Posterior vena cava (tissue), 2 donors: ENCODE measurements at regions of chr7 and their contacts with region 1.

Region 1: DNA sequence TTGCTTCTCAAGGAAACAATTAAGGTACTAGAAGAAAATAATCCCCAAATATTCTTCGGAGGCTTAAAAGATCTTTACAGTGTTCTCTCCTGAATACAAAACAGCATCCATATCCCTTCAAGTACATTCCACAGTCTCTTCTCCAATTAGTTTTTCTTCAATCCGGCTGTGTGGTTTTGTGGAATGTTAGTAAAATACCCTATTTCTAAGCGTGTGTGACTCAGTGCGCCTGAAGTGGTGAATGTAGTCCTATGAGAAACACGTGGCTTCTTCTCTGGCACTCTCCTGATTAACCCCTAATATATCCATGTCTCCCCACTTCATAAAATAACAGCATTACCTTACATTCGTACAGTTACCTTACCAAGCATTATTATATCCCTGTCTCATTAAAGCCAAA is 570.2 kb downstream of the ARL4A start:
- DNase-seq: no peak

Region 2: DNA sequence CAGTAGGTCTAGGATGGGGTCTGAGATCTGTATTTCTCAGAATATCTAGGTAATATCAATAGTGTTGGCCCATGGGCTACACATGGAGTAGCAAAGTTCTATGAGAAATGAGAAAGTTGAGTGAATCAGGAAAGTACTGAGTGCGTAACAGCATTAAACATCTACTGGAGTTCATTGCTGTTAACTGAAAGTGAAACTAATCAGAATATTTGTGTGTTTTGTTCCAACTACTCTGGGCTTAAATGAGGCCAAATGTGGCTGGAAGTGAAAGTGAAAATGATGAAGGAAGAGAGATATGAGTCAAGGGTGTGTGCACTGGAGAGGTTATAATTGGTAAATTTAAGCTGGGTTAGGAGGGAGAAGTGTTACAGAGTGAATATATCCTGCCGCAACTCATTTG is 1000.1 kb before region 1 on chr7:
- intact Hi-C with region 1: no loop called
- DNase-seq: no peak

Region 3: GRCh38 chr7:12674849-12675248 is 582.8 kb before region 1 on chr7:
- intact Hi-C with region 1: loop called in 1 of 2 experiments (anchors 5 kb)
- DNase-seq: no peak